ENCODE measurements at regions of chr5 and their contacts with region 1.

Region 1: GRCh38 chr5:160021831-160022446 is 13.0 kb downstream of the TTC1 start:
- DNase-seq: peak; percentile 66
- ATAC-seq: peak; percentile 90
- H3K4me3 Mint-ChIP-seq: no peak overlapping the region
- H3K27ac Mint-ChIP-seq: peak overlapping the region; percentile 71
- H3K4me1 Mint-ChIP-seq: peaks cover 22% of the 10 kb centered on the region
- H3K27me3 Mint-ChIP-seq: no peaks in the 10 kb centered on the region

Region 2: DNA sequence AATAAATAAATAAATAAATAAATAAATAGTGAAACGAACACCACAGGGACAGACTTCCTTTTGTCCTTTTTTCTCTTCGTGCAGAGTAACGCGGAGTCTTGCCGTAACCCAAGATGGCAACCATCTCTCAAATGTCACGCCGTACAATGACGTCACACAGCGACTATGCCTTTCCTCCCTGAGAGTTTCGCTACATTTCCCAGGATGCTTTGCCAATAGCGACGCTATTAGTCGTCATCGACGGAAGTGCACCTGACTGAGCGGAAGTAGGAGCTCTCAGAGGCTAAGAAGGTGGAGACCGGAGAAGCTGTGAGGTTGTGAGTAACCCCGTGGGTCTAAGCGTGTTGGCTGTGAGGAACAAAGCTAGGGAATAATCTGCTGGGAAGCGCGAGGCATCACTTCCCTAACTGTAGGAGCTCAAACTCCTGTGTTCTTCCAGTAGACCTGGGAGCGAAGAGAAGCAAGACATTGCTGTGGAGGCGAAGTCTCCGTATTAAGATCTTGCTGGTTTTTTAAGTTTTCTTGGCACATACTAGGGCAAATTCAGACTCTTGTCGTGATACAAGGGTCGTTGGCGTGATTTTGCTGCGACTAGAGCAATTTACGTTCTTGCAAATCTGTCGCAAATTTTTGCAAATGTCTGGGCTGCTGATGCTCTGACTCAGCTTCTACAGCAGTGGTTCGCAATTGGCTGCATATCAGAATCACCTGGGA is 12.9 kb before region 1 on chr5 and contains the start of gene TTC1:
- CTCF ChIA-PET with region 1: interaction called, 42 read pairs
- DNase-seq: peak; percentile 97
- ATAC-seq: peak; percentile 98
- H3K4me3 Mint-ChIP-seq: peak within 1 kb of the TSS; percentile 94
- H3K27ac Mint-ChIP-seq: peak within 1 kb of the TSS; percentile 98
- H3K4me1 Mint-ChIP-seq: peaks cover 25% of the 10 kb centered on the region
- H3K27me3 Mint-ChIP-seq: no peaks in the 10 kb centered on the region
- total RNA-seq, gene TTC1: 39.3 to 54.5 TPM

Region 3: GRCh38 chr5:160036243-160036642 is 14.3 kb after region 1 on chr5:
- CTCF ChIA-PET with region 1: interaction called, 12 read pairs
- DNase-seq: no peak
- ATAC-seq: no peak
- H3K4me3 Mint-ChIP-seq: no peak overlapping the region
- H3K27ac Mint-ChIP-seq: no peak overlapping the region
- H3K4me1 Mint-ChIP-seq: peaks cover 14% of the 10 kb centered on the region
- H3K27me3 Mint-ChIP-seq: no peaks in the 10 kb centered on the region

Region 4: DNA sequence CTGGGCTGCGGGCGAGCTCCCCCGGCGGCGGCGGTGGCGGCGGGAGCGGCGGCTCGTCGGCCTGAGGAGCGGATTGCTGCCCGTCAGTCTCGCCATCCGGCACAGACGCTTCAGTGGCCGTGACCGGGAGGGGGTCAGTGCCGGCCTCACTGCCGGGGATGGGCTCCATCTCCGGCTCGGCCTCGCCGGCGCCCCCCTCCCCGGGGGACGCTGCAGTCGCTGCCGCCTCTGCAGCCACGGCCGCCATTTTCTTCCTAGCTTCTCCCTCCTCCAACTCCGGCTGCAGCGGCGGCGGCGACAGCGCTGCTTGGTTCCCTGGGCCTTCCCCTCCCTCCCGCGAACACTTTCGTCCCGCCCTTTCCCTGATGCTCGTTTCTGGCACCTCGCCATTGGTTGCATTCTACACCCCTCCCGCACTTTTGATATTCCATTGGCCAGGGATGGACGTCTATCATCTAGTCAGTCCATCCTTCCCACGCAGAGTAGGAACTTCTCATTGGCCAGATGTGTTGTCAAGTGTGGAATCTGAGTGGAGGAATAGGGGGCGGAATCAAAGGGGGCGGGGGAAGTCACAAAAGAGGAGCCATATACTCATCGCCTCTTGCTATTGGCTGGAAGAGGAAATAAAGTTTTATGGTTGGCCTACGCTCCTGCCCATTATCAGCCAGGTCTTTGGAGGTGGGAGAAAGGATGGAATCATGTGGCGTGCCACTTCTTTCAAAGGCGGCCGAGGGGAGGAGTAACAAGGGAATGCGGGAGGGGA is 97.4 kb after region 1 on chr5 and contains the start of gene PWWP2A:
- CTCF ChIA-PET with region 1: interaction called, 12 read pairs
- DNase-seq: peak; percentile 98
- ATAC-seq: peak; percentile 97
- H3K4me3 Mint-ChIP-seq: peak within 1 kb of the TSS; percentile 82
- H3K27ac Mint-ChIP-seq: peak within 1 kb of the TSS; percentile 88
- H3K4me1 Mint-ChIP-seq: peaks cover 18% of the 10 kb centered on the region
- H3K27me3 Mint-ChIP-seq: no peaks in the 10 kb centered on the region
- total RNA-seq, gene PWWP2A: 21.0 to 24.1 TPM

Region 5: DNA sequence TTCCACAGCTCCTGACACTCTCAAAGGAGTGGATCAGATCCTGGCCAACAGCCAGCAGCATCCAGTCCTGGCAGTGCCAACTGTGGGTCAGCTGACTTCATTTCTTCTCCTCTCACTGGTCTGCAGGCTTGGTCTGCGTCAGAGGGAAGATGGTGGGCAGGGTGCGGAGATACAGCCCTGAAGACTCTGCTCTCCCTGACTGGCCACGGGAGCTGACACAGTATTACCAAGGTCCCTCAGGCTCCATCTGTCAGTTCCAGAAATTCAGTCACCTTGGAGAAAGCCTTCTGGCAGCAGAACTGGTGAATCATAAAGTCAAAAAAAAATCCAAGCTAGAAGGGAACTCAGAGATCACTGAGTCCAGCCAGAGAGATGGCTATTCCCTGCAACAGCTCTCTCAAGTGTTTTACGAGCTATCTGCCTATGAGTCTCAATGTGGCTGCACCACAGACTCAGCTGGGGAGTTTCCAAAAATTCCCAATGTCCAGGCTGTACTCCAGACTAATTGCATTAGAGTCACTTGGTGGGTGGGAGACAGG is 320.5 kb after region 1 on chr5:
- CTCF ChIA-PET with region 1: interaction called, 67 read pairs
- DNase-seq: no peak
- ATAC-seq: no peak
- H3K4me3 Mint-ChIP-seq: no peak overlapping the region
- H3K27ac Mint-ChIP-seq: no peak overlapping the region
- H3K4me1 Mint-ChIP-seq: peaks cover 13% of the 10 kb centered on the region
- H3K27me3 Mint-ChIP-seq: peaks cover 2% of the 10 kb centered on the region

Measured in activated CD8-positive, alpha-beta memory T cell treated with anti-CD3 and anti-CD28 coated beads, Interleukin-2, amount 10 ng/mL, durations not matched to agents 7 days and 5 days (primary cell).